IMR-90 (cell line): ENCODE measurements at regions of chr1 and their contacts with region 1.

Region 1: GRCh38 chr1:1959840-1960479 is 40.9 kb upstream of the TMEM52 start:
- DNase-seq: peak; percentile 51
- ATAC-seq: peak; percentile 95
- H3K4me3 ChIP-seq: no peak overlapping the region
- H3K27ac ChIP-seq: no peak overlapping the region
- H3K4me1 ChIP-seq: peaks cover 2% of the 10 kb centered on the region; the same call in 1 of the 2 replicates
- H3K27me3 ChIP-seq: peaks cover 35% of the 10 kb centered on the region
- CTCF ChIP-seq: peak; percentile 66
- POLR2A ChIP-seq: no peak
- RAD21 ChIP-seq: peak; percentile 62

Region 2: DNA sequence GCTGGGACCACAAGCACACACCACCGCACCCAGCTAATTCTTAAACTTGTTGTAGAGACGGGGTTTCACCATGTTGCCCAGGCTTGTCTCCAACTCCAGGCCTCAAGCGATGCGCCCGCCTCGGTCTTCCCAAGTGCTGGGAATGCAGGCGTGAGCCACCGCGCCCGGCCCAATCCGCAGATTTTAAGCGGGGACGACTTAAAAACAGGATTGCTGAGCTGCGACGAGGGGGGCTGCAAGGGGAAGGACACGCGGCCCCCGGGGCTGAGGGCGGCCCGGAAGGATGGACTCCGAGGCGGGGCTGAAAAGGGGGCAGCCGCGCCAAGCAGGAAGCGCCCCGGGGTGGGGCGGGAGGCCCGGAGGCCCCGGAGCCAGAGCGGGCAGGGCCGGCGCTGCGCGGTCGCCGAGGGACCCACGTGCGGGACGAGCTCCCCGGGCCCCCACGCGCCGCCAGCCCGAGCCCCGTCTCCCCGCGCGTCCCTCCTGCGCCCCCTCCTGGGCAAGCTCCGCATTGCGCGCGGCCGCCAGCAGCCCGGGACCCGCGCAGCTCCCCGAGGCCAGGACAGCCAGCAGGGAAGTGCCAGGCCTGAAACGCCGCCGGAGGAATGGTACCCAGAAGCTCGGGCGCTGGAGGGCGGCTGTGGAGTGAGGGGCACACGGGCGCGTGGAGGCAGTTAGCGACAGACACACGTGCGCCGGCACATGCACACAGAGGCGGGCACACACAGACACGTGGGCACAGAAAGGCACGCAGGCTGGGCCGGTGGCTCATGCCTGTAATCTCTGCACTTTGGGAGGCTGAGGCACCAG is 84.8 kb after region 1 on chr1:
- CTCF ChIA-PET with region 1: interaction called, 6 read pairs
- POLR2A ChIA-PET with region 1: no interaction called
- dilution Hi-C with region 1: no loop called
- in situ Hi-C with region 1: loop called (anchors 10 kb)
- intact Hi-C with region 1: loop called (anchors 5 kb)
- DNase-seq: peak; percentile 4
- ATAC-seq: peak; percentile 98
- H3K4me3 ChIP-seq: no peak overlapping the region; the same call in 1 of the 2 replicates
- H3K27ac ChIP-seq: no peak overlapping the region
- H3K4me1 ChIP-seq: peaks cover 2% of the 10 kb centered on the region; the same call in 1 of the 2 replicates
- H3K27me3 ChIP-seq: peaks cover 46% of the 10 kb centered on the region
- CTCF ChIP-seq: peak; percentile 82
- POLR2A ChIP-seq: no peak
- RAD21 ChIP-seq: peak; percentile 74

Region 3: DNA sequence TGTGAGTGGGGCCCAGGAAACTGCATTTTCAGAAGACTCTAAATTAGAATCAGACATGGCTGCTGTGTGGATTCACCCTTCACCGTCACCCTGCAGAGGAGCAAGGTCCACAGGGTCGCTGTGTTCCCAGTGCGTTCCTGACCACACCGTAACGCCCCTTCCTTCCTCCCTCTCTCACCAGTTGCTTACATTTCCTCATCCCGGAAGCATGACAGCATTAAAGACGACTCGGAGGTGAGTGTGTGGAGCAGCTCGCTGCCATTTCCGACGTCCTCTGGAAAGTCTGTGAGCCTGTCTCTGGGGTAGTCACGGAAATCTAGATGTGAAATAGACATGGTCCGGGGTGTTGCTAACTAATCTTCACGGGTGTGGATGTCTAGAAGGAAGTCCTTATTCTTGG is 188.7 kb after region 1 on chr1:
- CTCF ChIA-PET with region 1: no interaction called
- POLR2A ChIA-PET with region 1: no interaction called
- dilution Hi-C with region 1: no loop called
- in situ Hi-C with region 1: loop called (anchors 10 kb)
- intact Hi-C with region 1: no loop called
- DNase-seq: no peak
- ATAC-seq: no peak
- H3K4me3 ChIP-seq: no peak overlapping the region
- H3K27ac ChIP-seq: no peak overlapping the region
- H3K4me1 ChIP-seq: no peaks in the 10 kb centered on the region
- H3K27me3 ChIP-seq: peaks cover 2% of the 10 kb centered on the region; the same call in 1 of the 2 replicates
- CTCF ChIP-seq: no peak
- POLR2A ChIP-seq: no peak
- RAD21 ChIP-seq: no peak

Region 4: DNA sequence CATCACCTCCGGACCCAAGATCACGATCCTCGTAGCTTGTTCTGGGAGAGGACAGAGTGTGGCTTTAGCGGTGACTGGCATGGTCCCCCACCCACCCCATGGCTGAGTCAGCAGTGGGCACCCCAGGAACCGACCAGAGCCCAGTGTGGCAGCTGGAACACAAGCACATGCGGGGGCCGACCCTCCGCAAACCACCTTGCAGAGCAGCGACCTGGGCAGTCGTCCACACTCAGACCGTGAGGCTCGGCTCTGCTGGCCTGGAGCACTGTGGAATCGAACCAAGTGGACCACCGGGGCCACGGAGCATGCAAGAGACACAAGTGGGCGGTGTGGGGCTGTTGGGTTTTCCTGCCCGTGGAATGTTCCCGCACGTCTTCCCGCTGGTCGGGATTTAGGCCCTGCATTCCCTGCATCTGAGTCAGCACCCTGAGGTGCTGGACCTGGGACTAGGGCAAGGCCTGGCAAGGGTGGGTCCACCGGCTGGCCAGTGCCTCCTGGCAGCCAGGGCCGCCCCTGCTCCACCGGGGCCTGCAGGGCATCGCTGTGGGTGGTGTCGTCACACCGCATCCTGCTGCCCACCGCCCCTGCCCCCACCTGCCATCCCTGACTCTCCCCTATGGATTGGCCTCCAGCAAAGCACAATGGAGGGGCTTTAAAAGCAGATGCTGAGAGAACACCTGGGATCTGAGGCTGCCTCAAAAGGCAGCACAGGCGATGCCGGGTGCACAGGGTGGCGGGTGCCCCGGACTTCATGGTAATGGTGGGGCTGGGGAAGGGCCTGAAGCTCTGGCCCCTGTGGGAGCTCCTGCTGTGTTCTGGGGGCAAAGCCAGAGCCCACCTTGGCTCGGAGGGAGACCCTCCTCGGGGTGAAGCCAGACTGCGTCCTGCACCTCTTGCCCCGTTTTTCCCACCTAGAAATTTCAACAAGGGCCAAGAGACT is 412.9 kb after region 1 on chr1:
- CTCF ChIA-PET with region 1: no interaction called
- POLR2A ChIA-PET with region 1: no interaction called
- dilution Hi-C with region 1: no loop called
- in situ Hi-C with region 1: loop called (anchors 25 kb)
- intact Hi-C with region 1: no loop called
- DNase-seq: no peak
- ATAC-seq: no peak
- H3K4me3 ChIP-seq: no peak overlapping the region
- H3K27ac ChIP-seq: no peak overlapping the region
- H3K4me1 ChIP-seq: no peaks in the 10 kb centered on the region
- H3K27me3 ChIP-seq: no peaks in the 10 kb centered on the region
- CTCF ChIP-seq: no peak
- POLR2A ChIP-seq: no peak
- RAD21 ChIP-seq: no peak